Sciatic nerve (tissue), 2 donors: ENCODE measurements at regions of chr2 and their contacts with region 1.

Region 1: GRCh38 chr2:118705032-118705431 is 142.4 kb downstream of the EN1 start:
- DNase-seq: no peak
- ATAC-seq: no peak

Region 2: GRCh38 chr2:118520246-118520645 is 184.8 kb before region 1 on chr2:
- intact Hi-C with region 1: no loop called
- DNase-seq: no peak
- ATAC-seq: no peak

Region 3: GRCh38 chr2:118678985-118679384 is 26.0 kb before region 1 on chr2:
- intact Hi-C with region 1: loop called (anchors 1 kb)
- DNase-seq: no peak
- ATAC-seq: no peak

Region 4: GRCh38 chr2:120287183-120288015 is 1582.4 kb after region 1 on chr2:
- intact Hi-C with region 1: no loop called
- DNase-seq: no peak
- ATAC-seq: no peak